A549 (cell line): ENCODE measurements at regions of chrX and their contacts with region 1.

Region 1: GRCh38 chrX:153460845-153461244 is 9.5 kb downstream of the HAUS7 start:
- DNase-seq: peak; percentile 62 to 67
- ATAC-seq: peak; percentile 85 to 93; a peak in 5 of 6 replicates
- H3K4me3 ChIP-seq: no peak overlapping the region
- H3K27ac ChIP-seq: no peak overlapping the region
- H3K4me1 ChIP-seq: no peaks in the 10 kb centered on the region
- CTCF ChIP-seq: peak; percentile 59
- EP300 ChIP-seq: no peak
- POLR2A ChIP-seq: no peak
- RAD21 ChIP-seq: peak; percentile 25 to 49; a peak in 3 of 5 replicates

Region 2: GRCh38 chrX:153353416-153353815 is 107.4 kb before region 1 on chrX:
- CTCF ChIA-PET with region 1: no interaction called
- POLR2A ChIA-PET with region 1: no interaction called
- DNase-seq: no peak
- ATAC-seq: peak in 1 of 2 experiments; percentile 60; a peak in 3 of 6 replicates
- H3K4me3 ChIP-seq: no peak overlapping the region
- H3K27ac ChIP-seq: no peak overlapping the region
- H3K4me1 ChIP-seq: no peaks in the 10 kb centered on the region
- CTCF ChIP-seq: no peak
- EP300 ChIP-seq: no peak
- POLR2A ChIP-seq: no peak
- RAD21 ChIP-seq: no peak

Region 3: GRCh38 chrX:153445856-153446649 is 14.8 kb before region 1 on chrX and contains the start of gene TREX2:
- CTCF ChIA-PET with region 1: interaction called, 13 read pairs
- POLR2A ChIA-PET with region 1: no interaction called
- DNase-seq: no peak
- ATAC-seq: no peak
- H3K4me3 ChIP-seq: no peak within 1 kb of the TSS
- H3K27ac ChIP-seq: no peak within 1 kb of the TSS
- H3K4me1 ChIP-seq: no peaks in the 10 kb centered on the region
- CTCF ChIP-seq: no peak
- EP300 ChIP-seq: no peak
- POLR2A ChIP-seq: no peak
- RAD21 ChIP-seq: no peak
- polyA plus RNA-seq, gene TREX2: 0.27 and 0.32 TPM in 2 replicates

Region 4: GRCh38 chrX:153517423-153517822 is 56.6 kb after region 1 on chrX and contains the start of gene ATP2B3:
- CTCF ChIA-PET with region 1: interaction called, 10 read pairs
- POLR2A ChIA-PET with region 1: no interaction called
- DNase-seq: no peak
- ATAC-seq: no peak
- H3K4me3 ChIP-seq: peak within 1 kb of the TSS; percentile 38
- H3K27ac ChIP-seq: peak within 1 kb of the TSS in 1 of 2 experiments; percentile 49; a peak in 1 of 6 replicates
- H3K4me1 ChIP-seq: peaks cover 19% of the 10 kb centered on the region
- CTCF ChIP-seq: no peak
- EP300 ChIP-seq: no peak
- POLR2A ChIP-seq: no peak
- RAD21 ChIP-seq: no peak
- polyA plus RNA-seq, gene ATP2B3: 0.08 and 0.13 TPM in 2 replicates